ENCODE measurements at regions of chrX and their contacts with region 1.

Region 1: DNA sequence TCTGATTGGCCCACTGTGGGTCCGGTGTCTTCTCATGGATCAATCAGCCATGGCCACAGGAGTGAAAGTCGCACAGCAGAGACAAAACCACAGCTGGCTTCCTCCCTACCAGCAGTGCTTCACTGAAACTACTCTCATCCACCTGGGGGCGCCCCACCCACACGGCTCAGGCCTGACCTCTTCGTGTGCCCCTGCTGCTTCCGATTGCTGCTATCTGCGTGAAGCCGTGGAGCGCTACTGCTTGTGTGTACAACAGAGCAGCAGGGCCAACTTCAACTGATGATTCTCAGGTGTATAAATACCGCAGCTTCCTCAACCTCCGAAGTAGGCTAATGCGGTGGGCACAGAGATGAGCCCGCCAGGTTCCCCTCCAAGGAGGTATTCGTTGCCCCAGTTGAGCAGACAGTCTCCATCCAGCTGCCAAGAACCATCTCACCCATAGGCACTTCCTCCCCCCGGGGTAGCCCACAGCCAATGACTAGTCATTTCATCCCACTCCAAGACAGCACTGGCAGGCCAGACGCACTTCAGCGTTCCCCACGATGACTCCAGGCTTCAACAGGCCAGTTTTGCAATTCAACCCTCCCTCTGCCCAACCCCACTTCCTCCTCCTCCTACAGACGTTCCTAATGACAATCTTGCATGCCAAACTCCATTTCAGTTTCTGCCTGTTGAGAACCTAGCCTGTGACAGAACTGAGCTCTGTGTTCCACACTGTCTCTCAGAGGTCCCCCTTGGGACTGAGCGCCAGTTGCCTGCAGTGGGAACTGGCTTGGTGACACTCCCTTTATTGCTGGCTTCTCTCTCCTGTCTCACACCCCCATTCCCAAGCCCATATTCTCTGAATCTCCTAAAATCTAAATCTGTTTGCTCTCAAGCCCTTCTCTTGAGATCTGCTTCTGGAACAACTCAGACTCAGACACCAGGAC is 41.3 kb upstream of the ATP6AP2 start:
- DNase-seq: no peak
- H3K4me3 ChIP-seq: no peak overlapping the region
- H3K27ac ChIP-seq: no peak overlapping the region
- H3K4me1 ChIP-seq: peaks cover 6% of the 10 kb centered on the region
- H3K27me3 ChIP-seq: peaks cover 5 to 19% of the 10 kb centered on the region in 2 experiments
- CTCF ChIP-seq: no peak
- POLR2A ChIP-seq: no peak

Region 2: GRCh38 chrX:38803586-38804431 is 1735.7 kb before region 1 on chrX:
- CTCF ChIA-PET with region 1: no interaction called
- POLR2A ChIA-PET with region 1: no interaction called
- dilution Hi-C with region 1: no loop called
- intact Hi-C with region 1: no loop called
- DNase-seq: peak; percentile 67
- H3K4me3 ChIP-seq: peak overlapping the region; percentile 52 to 85 (median 55)
- H3K27ac ChIP-seq: peak overlapping the region; percentile 82
- H3K4me1 ChIP-seq: peaks cover 15% of the 10 kb centered on the region
- H3K27me3 ChIP-seq: no peaks in the 10 kb centered on the region
- CTCF ChIP-seq: no peak
- POLR2A ChIP-seq: peak; percentile 37

Region 3: GRCh38 chrX:40552768-40553167 is 13.3 kb after region 1 on chrX:
- CTCF ChIA-PET with region 1: interaction called, 16 read pairs
- POLR2A ChIA-PET with region 1: no interaction called
- dilution Hi-C with region 1: no loop called
- intact Hi-C with region 1: no loop called
- DNase-seq: no peak
- H3K4me3 ChIP-seq: no peak overlapping the region
- H3K27ac ChIP-seq: no peak overlapping the region
- H3K4me1 ChIP-seq: no peaks in the 10 kb centered on the region
- H3K27me3 ChIP-seq: peaks cover 0 to 2% of the 10 kb centered on the region in 2 experiments
- CTCF ChIP-seq: no peak
- POLR2A ChIP-seq: no peak

Region 4: GRCh38 chrX:40580537-40581335 is 41.3 kb after region 1 on chrX and contains the start of gene ATP6AP2:
- CTCF ChIA-PET with region 1: interaction called, 12 read pairs
- POLR2A ChIA-PET with region 1: no interaction called
- dilution Hi-C with region 1: no loop called
- intact Hi-C with region 1: no loop called
- DNase-seq: peak; percentile 94
- H3K4me3 ChIP-seq: peak within 1 kb of the TSS; percentile 48 to 72 (median 67)
- H3K27ac ChIP-seq: peak within 1 kb of the TSS; percentile 19
- H3K4me1 ChIP-seq: peaks cover 10% of the 10 kb centered on the region
- H3K27me3 ChIP-seq: no peaks in the 10 kb centered on the region
- CTCF ChIP-seq: no peak
- POLR2A ChIP-seq: no peak
- total RNA-seq, gene ATP6AP2: 84.6 and 90.8 TPM in 2 replicates

Region 5: GRCh38 chrX:40792433-40792832 is 253.0 kb after region 1 on chrX:
- CTCF ChIA-PET with region 1: interaction called, 8 read pairs
- POLR2A ChIA-PET with region 1: no interaction called
- dilution Hi-C with region 1: no loop called
- intact Hi-C with region 1: loop called (anchors 1 kb)
- DNase-seq: no peak
- H3K4me3 ChIP-seq: no peak overlapping the region
- H3K27ac ChIP-seq: no peak overlapping the region
- H3K4me1 ChIP-seq: peaks cover 6% of the 10 kb centered on the region
- H3K27me3 ChIP-seq: no peaks in the 10 kb centered on the region
- CTCF ChIP-seq: no peak
- POLR2A ChIP-seq: no peak

Region 6: DNA sequence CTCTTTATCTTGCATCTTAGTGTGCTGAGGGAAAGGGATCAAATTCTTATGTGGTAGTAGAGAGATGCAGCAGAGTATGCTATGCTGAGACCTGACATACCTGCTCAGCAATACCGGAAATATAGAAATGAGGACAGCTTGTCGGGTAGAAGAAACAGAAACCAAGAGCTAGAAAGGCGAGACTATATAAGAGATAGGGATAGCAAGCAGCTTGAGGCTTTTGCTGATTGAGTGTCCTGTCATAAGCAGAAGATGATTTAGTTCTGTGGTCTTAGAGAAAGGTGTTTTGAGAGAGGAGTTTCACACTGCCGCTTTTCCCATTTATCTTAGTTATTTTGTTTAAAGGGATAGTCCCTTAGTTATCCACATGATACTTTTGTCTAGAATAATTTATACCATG is 577.5 kb after region 1 on chrX:
- CTCF ChIA-PET with region 1: interaction called, 9 read pairs
- POLR2A ChIA-PET with region 1: no interaction called
- dilution Hi-C with region 1: no loop called
- intact Hi-C with region 1: loop called (anchors 1 kb)
- DNase-seq: no peak
- H3K4me3 ChIP-seq: no peak overlapping the region
- H3K27ac ChIP-seq: no peak overlapping the region
- H3K4me1 ChIP-seq: peaks cover 4% of the 10 kb centered on the region
- H3K27me3 ChIP-seq: no peaks in the 10 kb centered on the region
- CTCF ChIP-seq: no peak
- POLR2A ChIP-seq: no peak

Measured in endothelial cell of umbilical vein (primary cell).